CD8-positive, alpha-beta T cell (primary cell): ENCODE measurements at regions of chrX and their contacts with region 1.

Region 1: DNA sequence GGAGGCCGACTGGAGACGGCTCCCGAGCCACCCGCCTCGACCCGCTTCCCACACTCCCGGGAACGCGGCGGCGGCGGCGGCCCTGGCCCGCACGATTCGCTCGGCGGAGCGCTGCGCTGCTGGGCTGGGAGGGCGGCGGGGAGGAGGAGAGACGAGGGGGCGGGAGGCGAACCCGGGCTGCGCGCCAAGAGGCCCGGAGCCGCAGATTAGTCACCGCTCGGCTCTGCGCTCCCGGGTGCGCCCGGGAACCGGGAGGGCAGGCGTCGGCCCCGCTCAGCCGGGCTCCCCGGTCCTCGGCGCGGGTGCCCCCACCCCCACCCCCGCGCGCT is 11.2 kb upstream of the BCOR start:
- DNase-seq: peak; percentile 26 to 85 (median 69)
- ATAC-seq: peak; percentile 57
- H3K4me3 ChIP-seq: peak overlapping the region; percentile 37 to 40
- H3K4me3 Mint-ChIP-seq: peak overlapping the region; percentile 64
- H3K27ac ChIP-seq: no peak overlapping the region
- H3K27ac Mint-ChIP-seq: no peak overlapping the region
- H3K4me1 ChIP-seq: peaks cover 15% of the 10 kb centered on the region
- H3K4me1 Mint-ChIP-seq: peaks cover 13% of the 10 kb centered on the region
- H3K27me3 ChIP-seq: no peaks in the 10 kb centered on the region
- H3K27me3 Mint-ChIP-seq: no peaks in the 10 kb centered on the region
- CTCF ChIP-seq: no peak

Region 2: GRCh38 chrX:40140706-40141499 is 32.0 kb after region 1 on chrX:
- CTCF ChIA-PET with region 1: interaction called, 3 read pairs
- POLR2A ChIA-PET with region 1: no interaction called
- intact Hi-C with region 1: loop called in 1 of 2 experiments (anchors 5 kb)
- DNase-seq: no peak
- ATAC-seq: no peak
- H3K4me3 ChIP-seq: no peak overlapping the region
- H3K4me3 Mint-ChIP-seq: no peak overlapping the region
- H3K27ac ChIP-seq: no peak overlapping the region
- H3K27ac Mint-ChIP-seq: no peak overlapping the region
- H3K4me1 ChIP-seq: no peaks in the 10 kb centered on the region
- H3K4me1 Mint-ChIP-seq: no peaks in the 10 kb centered on the region
- H3K27me3 ChIP-seq: no peaks in the 10 kb centered on the region
- H3K27me3 Mint-ChIP-seq: no peaks in the 10 kb centered on the region
- CTCF ChIP-seq: no peak